T-cell (primary cell): ENCODE measurements at regions of chr2 and their contacts with region 1.

Region 1: DNA sequence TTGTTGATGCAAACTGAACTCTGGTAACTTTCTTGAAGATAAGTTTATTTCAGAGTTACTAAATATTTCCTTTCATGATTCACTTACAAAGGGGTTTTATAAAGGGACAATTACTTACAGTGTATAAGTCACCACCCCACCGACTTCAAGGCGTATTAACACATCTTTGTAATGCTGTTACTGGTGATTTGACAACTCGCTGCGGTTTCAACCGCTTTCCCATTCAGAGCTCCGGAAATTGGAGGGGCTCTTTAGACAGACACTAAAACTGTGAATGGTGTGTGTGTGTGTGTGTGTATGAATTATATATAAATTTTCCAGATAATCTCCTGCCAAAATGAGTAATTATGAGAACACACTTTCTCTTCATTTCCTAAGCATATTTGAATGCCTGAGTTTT is 4.9 kb downstream of the TM4SF20 start:
- DNase-seq: peak in 2 of 35 experiments; percentile 5 to 17
- ATAC-seq: no peak
- H3K4me3 ChIP-seq: no peak overlapping the region
- H3K4me3 Mint-ChIP-seq: no peak overlapping the region
- H3K27ac ChIP-seq: no peak overlapping the region
- H3K27ac Mint-ChIP-seq: no peak overlapping the region
- H3K4me1 ChIP-seq: no peaks in the 10 kb centered on the region
- H3K4me1 Mint-ChIP-seq: peaks cover 0 to 5% (median 4%) of the 10 kb centered on the region in 3 donors
- H3K27me3 ChIP-seq: peaks cover 0 to 7% of the 10 kb centered on the region in 2 experiments
- H3K27me3 Mint-ChIP-seq: peaks cover 6 to 15% of the 10 kb centered on the region in 2 donors

Region 2: GRCh38 chr2:227363756-227364155 is 10.4 kb before region 1 on chr2:
- CTCF ChIA-PET with region 1: interaction called in 1 of 2 experiments, 13 read pairs
- POLR2A ChIA-PET with region 1: no interaction called
- DNase-seq: peak in 2 of 35 experiments; percentile 4 to 43
- ATAC-seq: no peak
- H3K4me3 ChIP-seq: no peak overlapping the region
- H3K4me3 Mint-ChIP-seq: no peak overlapping the region
- H3K27ac ChIP-seq: no peak overlapping the region
- H3K27ac Mint-ChIP-seq: no peak overlapping the region
- H3K4me1 ChIP-seq: no peaks in the 10 kb centered on the region
- H3K4me1 Mint-ChIP-seq: peaks cover 0 to 4% (median 0%) of the 10 kb centered on the region in 3 donors
- H3K27me3 ChIP-seq: no peaks in the 10 kb centered on the region
- H3K27me3 Mint-ChIP-seq: no peaks in the 10 kb centered on the region